ENCODE measurements at regions of chr17 and their contacts with region 1.

Region 1: DNA sequence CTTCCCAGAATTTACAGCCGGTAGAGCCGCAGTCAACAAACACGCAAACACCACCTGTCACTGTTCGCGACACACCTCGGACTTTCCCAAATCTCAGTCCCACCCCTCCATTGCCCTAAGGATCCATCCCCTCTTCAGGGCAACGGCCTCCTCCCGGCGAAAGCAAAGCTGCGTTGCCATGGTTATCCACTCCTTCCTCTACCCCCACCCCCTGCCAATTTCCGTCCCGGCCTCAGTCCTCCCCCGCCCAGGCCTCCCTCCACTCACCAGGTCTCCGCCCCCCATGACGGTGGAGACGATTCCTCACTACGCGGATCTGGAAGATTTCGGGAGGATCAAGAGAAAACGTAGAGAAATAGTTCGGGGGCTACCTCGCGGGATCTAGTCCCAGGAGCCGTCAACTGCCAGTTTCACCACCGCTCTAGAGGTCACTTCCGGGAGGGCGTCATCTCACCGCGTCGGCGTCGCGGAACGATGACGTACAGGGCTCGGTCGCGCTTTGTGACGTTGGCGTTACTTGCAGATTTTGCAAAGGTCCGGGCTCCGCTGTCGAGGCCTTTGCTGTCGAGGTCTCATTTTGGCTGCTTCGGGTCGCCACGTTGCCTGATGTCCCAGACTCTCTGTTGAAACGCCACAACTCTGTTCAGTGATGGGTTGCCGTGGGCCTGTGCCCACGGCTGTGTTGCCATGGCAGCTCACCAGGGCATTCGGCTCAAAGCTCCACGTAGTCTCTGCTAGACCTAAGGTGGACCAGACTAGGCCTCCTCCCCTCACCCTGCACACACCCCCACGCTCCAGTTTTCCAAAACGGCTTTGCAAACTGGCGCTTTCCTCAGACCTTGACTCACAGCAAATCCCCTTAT is at the start of gene CWC25:
- DNase-seq: peak; percentile 90 to 99
- ATAC-seq: peak; percentile 88 to 89
- H3K4me3 ChIP-seq: peak within 1 kb of the TSS; percentile 58
- H3K27ac ChIP-seq: peak within 1 kb of the TSS; percentile 94 to 96
- H3K4me1 ChIP-seq: peaks cover 14% of the 10 kb centered on the region
- CTCF ChIP-seq: no peak
- EP300 ChIP-seq: peak in 1 of 2 experiments; percentile 28; a peak in 1 of 5 replicates
- POLR2A ChIP-seq: peak; percentile 69
- RAD21 ChIP-seq: no peak
- polyA plus RNA-seq, gene CWC25: 34.1 and 34.5 TPM in 2 replicates

Region 2: DNA sequence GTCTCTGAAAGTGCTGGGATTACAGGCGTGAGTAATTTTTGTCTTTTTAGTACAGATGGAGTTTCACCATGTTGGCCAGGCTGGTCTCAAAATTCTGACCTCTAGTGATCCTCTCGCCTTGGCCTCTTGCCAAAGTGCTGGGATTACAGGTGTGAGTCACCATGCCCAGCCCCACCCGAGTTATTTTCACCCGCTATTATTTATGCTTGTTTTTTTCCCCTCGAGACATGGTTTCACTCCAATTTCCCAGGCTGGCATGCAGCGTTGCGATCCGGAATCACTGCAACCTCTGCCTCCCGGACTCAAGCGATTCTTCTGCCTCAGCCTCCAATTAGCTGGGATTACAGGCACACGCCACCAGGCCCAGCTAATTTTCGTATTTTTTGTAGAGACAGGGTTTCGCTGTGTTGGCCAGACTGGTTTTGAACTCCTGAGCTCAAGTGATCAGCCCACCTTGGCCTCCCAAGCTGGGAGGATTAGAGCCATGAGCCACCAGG is 19.2 kb after region 1 on chr17:
- CTCF ChIA-PET with region 1: interaction called, 3 read pairs
- POLR2A ChIA-PET with region 1: interaction called, 12 read pairs
- DNase-seq: no peak
- ATAC-seq: peak in 1 of 2 experiments; percentile 3; a peak in 1 of 6 replicates
- H3K4me3 ChIP-seq: no peak overlapping the region
- H3K27ac ChIP-seq: no peak overlapping the region
- H3K4me1 ChIP-seq: no peaks in the 10 kb centered on the region
- CTCF ChIP-seq: no peak
- EP300 ChIP-seq: no peak
- POLR2A ChIP-seq: no peak
- RAD21 ChIP-seq: no peak

Region 3: DNA sequence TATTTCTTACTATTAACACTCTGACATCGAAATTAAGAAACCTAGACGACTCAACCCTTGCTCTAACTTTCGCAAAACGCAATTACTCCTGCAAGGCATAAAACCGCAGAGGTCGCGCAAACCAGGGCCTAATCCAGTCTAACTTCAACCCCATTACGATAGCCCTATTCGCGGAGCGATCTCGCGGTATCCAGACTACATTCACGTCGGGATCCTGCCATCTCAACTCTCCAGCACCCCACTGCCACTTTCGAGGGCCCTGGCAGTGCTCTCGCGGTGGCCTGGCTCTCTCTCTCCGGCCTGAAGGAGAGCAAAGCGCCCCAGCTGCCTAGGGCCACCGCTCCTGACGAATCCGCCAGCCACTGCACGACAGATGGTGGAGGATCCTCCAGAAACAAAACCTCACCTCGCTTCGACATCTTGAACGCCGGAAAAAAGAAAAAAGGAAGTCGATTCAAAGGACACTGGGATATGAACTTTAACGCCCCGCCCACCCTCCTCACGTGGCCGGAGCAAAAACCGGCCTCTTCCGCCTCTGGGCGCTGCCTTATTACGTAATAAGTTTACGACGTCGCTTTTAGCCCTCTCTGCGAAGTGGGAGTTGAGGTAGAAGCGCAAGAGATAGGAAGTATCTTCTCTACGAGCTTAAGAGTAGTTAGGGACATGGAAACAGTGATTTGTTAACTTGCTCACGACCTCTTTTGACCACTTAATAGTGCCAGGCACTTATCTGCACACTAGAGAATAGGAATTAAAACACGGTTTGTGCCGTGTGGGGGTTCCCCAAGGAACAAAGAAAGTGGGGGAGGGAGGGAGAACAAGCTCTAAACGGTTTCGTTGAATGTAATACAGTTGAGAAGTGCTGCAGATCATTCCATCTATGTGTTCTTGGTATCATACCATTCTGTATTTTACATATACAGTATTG is 28.4 kb after region 1 on chr17 and contains the start of gene RPL23:
- CTCF ChIA-PET with region 1: interaction called, 3 read pairs
- POLR2A ChIA-PET with region 1: interaction called, 30 read pairs
- DNase-seq: peak; percentile 93 to 99
- ATAC-seq: peak; percentile 91 to 95
- H3K4me3 ChIP-seq: peak within 1 kb of the TSS; percentile 87
- H3K27ac ChIP-seq: peak within 1 kb of the TSS; percentile 85 to 93
- H3K4me1 ChIP-seq: peaks cover 24% of the 10 kb centered on the region
- CTCF ChIP-seq: no peak
- EP300 ChIP-seq: no peak
- POLR2A ChIP-seq: peak; percentile 97
- RAD21 ChIP-seq: peak in 1 of 2 experiments; percentile 10; a peak in 1 of 5 replicates
- polyA plus RNA-seq, gene RPL23: 2,297 and 2,715 TPM in 2 replicates

Region 4: DNA sequence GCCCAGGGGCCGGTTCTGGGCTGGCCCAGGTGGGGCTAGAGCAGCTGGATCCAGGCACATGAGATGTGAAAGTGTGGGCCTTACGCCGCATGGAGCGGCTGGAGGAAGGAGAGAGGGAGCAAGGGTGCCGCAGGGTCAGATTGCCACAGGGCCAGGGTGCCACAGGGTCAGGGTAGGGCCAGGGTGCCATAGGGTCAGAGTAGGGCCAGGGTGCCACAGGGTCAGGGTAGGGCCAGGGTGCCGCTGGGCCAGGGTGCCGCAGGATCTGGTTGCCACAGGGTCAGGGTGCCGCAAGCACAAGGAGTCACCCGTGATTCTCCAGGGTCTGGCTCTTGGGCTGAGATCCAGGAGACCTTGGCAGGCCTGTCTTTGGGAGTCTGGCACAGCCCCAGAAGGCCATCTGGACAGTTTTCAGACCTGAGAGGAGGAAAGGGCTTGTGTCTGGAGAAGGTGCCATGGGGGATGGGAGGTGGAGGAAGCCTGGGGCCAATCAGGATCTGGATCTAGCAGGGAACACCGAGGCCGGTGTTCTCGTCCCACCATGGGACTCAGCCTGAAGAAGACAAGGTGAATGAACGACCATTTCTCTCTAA is 87.2 kb after region 1 on chr17:
- CTCF ChIA-PET with region 1: no interaction called
- POLR2A ChIA-PET with region 1: no interaction called
- DNase-seq: no peak
- ATAC-seq: no peak
- H3K4me3 ChIP-seq: no peak overlapping the region
- H3K27ac ChIP-seq: peak overlapping the region in 1 of 2 experiments; percentile 39; a peak in 1 of 6 replicates
- H3K4me1 ChIP-seq: peaks cover 34% of the 10 kb centered on the region
- CTCF ChIP-seq: no peak
- EP300 ChIP-seq: no peak
- POLR2A ChIP-seq: no peak
- RAD21 ChIP-seq: no peak